Pancreas (tissue), 10 donors: ENCODE measurements at regions of chr5 and their contacts with region 1.

Region 1: GRCh38 chr5:37837414-37838032 is 2.3 kb downstream of the GDNF start:
- DNase-seq: peak; percentile 49 to 86 (median 69)
- ATAC-seq: peak; percentile 72 to 88 (median 84)
- H3K4me3 ChIP-seq: peak overlapping the region in 2 of 4 donors; percentile 11 to 32
- H3K27ac ChIP-seq: no peak overlapping the region
- H3K4me1 ChIP-seq: peaks cover 0 to 16% (median 0%) of the 10 kb centered on the region in 3 donors
- H3K27me3 ChIP-seq: peaks cover 0 to 28% (median 13%) of the 10 kb centered on the region in 4 donors
- CTCF ChIP-seq: peak; percentile 47 to 79 (median 53)

Region 2: DNA sequence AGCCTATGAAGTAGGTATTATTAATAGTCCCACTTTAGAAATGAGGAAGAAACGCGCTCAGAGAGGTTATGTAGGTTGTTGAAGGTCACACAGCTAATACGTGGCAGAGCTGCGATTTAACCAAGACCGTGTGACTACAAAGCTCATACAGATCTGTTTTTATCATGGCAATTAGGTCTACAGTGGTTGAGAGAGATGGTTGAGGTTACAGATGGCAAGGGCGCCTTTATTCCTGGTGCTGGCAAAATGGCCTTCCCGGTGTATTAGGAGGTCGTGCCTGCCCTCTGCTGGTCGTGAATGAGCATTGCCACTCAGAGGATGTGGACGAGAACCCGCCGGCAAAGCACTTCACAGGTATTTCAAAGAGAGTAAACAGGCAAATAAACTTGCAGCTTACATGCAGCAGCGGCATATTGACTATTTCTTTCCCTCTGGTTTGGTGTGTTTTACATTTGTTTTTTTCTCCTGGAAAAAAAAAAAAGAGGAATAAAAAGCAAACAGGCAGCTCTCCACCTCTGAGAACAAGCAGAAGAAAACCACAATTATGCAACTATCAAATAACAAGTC is 355.6 kb after region 1 on chr5:
- intact Hi-C with region 1: loop called (anchors 5 to 10 kb)
- DNase-seq: peak; percentile 40 to 84 (median 74)
- ATAC-seq: peak; percentile 75 to 99 (median 96)
- H3K4me3 ChIP-seq: no peak overlapping the region
- H3K27ac ChIP-seq: no peak overlapping the region
- H3K4me1 ChIP-seq: no peaks in the 10 kb centered on the region
- H3K27me3 ChIP-seq: peaks cover 0 to 9% (median 3%) of the 10 kb centered on the region in 4 donors
- CTCF ChIP-seq: peak; percentile 51 to 83 (median 76)